ENCODE measurements at regions of chr12 and their contacts with region 1.

Region 1: GRCh38 chr12:119412811-119413794 is 78.6 kb downstream of the CCDC60 start:
- DNase-seq: no peak

Region 2: GRCh38 chr12:118979763-118980406 is 433.2 kb before region 1 on chr12:
- intact Hi-C with region 1: loop called (anchors 5 kb)
- DNase-seq: no peak

Region 3: DNA sequence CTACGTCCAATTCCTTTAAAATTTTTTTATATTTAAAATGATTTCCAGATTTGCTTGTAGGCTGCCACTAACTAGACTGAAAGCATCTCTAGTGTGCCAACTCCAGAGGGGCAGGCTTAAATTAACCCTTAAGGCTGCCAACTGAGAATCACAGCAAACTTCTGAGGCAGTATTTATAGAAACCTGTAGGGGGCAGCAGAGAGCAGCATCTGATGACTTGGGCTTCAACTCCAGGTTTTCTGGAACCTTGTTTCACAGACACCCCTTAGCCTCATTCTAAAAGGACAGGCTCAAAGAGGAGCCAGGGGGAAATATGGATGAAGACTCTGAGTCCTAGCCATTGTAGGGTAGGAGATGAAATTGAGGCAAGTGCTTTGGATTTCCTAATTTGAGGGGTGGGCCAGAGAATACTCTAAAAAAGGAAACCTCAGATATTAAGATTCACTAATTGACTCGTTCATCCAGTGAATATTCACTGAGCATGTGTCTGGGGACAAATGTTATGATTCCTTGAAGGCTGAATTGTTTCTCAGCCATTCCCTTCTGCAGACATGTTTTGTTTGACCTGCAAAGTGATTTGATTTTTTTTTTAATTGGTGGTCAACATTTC is 297.7 kb before region 1 on chr12:
- intact Hi-C with region 1: loop called (anchors 2 kb)
- DNase-seq: no peak

Region 4: GRCh38 chr12:119208622-119209061 is 204.5 kb before region 1 on chr12:
- intact Hi-C with region 1: loop called (anchors 10 kb)
- DNase-seq: peak; percentile 83

Region 5: GRCh38 chr12:119274636-119275065 is 138.5 kb before region 1 on chr12:
- intact Hi-C with region 1: loop called (anchors 10 kb)
- DNase-seq: no peak

Region 6: GRCh38 chr12:119328111-119328510 is 85.0 kb before region 1 on chr12:
- intact Hi-C with region 1: loop called (anchors 10 kb)
- DNase-seq: no peak